BJ (cell line): ENCODE measurements at regions of chr2 and their contacts with region 1.

Region 1: GRCh38 chr2:229154381-229154780 is 116.7 kb downstream of the PID1 start:
- DNase-seq: no peak
- H3K4me3 ChIP-seq: no peak overlapping the region
- H3K27me3 ChIP-seq: no peaks in the 10 kb centered on the region
- CTCF ChIP-seq: no peak

Region 2: DNA sequence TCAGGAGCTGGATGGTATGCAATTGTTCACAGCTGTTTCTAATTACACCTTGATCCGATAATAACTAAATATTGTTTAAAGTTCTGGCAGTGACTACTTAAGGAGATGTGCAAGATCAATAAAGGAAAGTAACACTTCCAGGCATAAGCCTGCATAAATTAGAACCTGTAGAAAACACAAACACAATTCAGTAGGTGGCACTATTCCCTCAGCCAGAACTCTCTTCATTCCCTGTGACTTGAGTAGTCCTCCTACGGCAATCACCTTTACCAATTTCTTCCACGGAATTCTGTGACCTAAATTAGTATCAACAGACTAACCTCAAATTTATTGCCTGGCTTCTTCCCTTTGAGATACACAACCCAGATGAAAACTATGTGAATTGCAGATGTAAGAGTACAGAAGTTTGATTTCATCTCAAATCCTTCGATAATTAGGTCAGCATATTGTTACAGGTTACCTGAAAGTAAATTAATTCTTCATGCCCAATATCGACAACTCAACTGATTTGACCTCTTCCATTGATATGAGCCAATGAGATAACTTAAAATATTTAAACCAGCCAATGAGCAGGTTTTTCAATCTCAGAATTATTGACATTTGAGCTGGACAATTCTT is 21.1 kb before region 1 on chr2:
- CTCF ChIA-PET with region 1: no interaction called
- POLR2A ChIA-PET with region 1: no interaction called
- DNase-seq: no peak
- H3K4me3 ChIP-seq: no peak overlapping the region
- H3K27me3 ChIP-seq: no peaks in the 10 kb centered on the region
- CTCF ChIP-seq: peak; percentile 55

Region 3: GRCh38 chr2:229173825-229174359 is 19.5 kb after region 1 on chr2:
- CTCF ChIA-PET with region 1: no interaction called
- POLR2A ChIA-PET with region 1: interaction called, 16 read pairs
- DNase-seq: no peak
- H3K4me3 ChIP-seq: no peak overlapping the region
- H3K27me3 ChIP-seq: no peaks in the 10 kb centered on the region
- CTCF ChIP-seq: no peak